ENCODE measurements at regions of chr16 and their contacts with region 1.

Region 1: DNA sequence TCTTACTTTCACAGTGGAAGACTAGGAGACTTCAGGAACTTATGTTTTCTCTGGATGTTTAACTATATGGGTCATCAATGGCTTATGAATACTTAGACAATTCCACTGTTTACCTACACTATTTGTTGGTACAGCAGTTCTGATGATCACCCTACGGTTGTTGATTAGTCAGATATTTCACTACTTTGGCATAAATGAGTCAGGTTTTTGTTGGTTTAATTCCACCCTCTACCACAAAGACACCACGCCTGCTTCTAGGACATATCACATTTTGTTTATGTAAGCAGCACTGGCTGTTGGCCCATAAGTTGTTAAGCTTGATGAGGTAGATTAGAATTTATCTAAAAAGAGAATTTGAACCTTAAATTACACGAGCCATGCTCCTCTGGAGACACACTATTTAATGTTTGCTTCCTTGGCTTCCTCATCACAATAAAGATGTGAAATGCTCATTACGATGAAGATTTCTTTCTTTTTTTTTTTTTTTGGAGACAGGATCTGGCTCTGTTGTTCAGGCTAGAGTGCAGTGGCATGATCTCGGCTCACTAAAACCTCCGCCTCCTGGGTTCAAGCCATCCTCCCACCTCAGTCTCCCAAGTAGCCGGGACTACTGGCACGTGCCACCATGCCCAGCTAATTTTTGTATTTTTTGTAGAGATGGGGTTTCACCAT is 4.3 kb downstream of the GDE1 start:
- DNase-seq: no peak

Region 2: DNA sequence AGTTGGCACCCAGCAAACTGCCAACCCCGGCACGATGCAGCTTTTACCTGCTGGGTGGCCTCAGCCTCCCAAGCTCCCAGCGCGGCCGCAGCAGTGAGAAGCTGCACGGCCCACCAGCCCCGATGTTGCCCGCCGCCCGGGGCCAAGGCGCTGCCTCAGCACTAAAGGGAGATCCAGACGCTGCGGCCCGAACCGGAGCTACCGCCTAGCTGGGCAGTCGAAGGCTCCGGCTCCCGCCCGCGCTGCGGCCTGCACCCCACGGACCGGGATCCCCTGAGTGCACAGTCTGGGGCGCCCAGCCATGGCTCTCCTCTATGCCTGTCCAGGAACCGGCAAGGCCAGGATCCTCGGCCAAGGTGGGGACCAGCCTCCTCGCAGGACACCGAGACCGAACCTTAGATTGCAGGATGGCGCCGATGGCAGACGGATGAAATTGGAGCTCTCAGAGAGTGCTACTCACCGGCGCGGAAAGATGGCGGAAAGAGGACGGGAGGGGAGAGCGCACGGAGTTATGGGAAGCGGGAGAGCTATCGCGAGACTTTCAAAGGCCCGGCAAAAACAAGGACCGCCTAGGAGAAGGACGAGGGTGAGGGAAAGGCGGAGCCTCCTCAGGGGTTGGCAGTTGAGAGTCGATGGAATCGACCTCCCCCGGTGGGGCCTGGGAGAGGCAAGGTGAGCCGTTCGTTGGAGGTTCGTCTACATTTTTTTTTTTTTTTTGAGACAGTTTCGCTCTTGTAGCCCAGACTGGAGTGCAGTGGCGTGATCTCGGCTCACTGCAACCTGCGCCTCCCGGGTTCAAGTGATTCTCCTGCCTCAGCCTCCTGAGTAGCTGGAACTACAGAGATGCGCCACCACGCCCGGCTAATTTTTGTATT is 727.5 kb before region 1 on chr16 and contains the start of gene RPS15A:
- intact Hi-C with region 1: loop called (anchors 5 kb)
- DNase-seq: peak; percentile 97
- total RNA-seq, gene RPS15A: 510 TPM

Region 3: GRCh38 chr16:19316846-19317245 is 200.7 kb before region 1 on chr16:
- intact Hi-C with region 1: no loop called
- DNase-seq: no peak

Measured in cardiac septum (tissue), 1 donor.